ENCODE measurements at regions of chr10 and their contacts with region 1.

Region 1: DNA sequence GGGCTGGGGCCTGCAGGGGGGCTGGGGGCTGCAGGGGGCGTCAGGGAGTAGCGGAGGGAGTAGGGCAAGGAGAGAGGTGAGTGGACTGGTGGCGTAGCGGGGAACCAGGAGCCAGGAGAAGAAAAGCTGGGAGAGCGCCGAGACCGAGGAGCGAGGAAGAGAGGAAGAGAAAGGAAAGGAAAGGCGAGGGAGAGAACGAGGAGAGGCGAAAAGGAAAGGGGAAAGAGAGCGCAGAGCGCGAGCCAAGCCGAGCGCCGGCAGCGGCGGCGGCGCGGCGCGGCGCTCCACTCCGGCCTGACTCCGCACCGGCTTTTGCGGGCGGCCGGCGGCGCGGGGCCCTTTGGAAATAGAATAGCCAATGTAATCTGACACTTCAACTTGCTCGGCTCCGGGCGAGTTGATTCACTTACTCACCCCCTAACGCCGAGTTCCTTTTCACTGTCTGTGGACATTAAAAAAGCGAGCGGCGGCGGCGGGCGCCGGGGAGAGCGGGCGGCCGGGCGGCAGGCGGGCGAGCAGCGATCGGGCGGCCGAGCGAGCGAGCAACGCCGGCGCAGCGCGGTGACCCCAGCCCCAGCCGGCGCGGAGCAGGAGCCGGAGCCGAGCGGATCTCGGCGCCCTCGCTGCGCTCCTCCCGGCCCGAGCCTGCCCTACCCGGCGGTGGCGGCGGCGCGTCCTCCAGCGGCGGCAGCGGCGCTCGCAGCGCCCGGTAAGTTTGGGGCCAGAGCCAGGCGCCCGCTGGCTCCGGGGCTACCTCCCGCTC is at the start of gene ZMIZ1:
- DNase-seq: peak; percentile 74 to 86 (median 84)
- ATAC-seq: peak; percentile 78
- H3K4me3 ChIP-seq: peak within 1 kb of the TSS; percentile 83
- H3K4me3 Mint-ChIP-seq: peak within 1 kb of the TSS; percentile 92 to 98 (median 96)
- H3K27ac ChIP-seq: peak within 1 kb of the TSS; percentile 62
- H3K27ac Mint-ChIP-seq: peak within 1 kb of the TSS; percentile 57 to 97 (median 91)
- H3K4me1 ChIP-seq: peaks cover 11 to 24% of the 10 kb centered on the region in 2 donors
- H3K4me1 Mint-ChIP-seq: peaks cover 21 to 65% (median 53%) of the 10 kb centered on the region in 7 donors
- H3K27me3 ChIP-seq: no peaks in the 10 kb centered on the region
- H3K27me3 Mint-ChIP-seq: peaks cover 0 to 25% (median 0%) of the 10 kb centered on the region in 5 donors
- total RNA-seq, gene ZMIZ1: 13.5 to 57.2 (median 24.5) TPM

Region 2: DNA sequence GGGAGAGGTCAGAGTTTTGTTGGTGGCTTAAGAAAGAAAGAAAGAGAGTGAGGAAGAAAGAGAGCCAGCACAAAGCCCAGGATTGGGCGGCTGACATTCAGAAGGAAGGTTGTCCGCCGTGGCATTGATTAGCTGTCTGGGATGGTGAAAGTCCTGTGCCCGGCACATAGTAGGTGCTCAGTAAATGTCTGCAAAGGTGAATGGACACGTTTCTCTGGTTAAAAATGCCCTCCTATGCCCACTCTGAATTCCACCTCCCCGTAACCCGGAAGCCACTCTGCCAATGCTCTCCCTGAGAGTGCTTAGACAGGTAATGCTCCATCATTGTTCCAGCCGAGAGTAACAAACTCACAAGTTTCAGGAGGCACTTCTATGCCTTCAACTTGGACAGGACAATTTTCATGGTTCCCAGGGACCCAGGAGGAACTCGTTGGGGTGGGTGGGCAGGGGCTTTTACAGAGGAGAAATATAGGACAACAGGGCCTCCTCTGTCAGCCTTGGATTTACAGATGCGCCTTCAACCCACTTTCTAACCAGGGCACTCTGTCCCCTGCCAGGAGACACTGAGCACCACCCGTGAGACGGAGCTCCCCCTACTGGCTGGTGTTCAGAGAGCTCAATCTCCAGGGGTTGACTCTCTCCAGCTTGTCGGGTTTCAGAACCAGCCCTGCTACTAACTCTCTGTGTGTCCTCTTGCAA is 411.4 kb before region 1 on chr10:
- CTCF ChIA-PET with region 1: no interaction called
- POLR2A ChIA-PET with region 1: no interaction called
- intact Hi-C with region 1: loop called in 1 of 2 experiments (anchors 5 kb)
- DNase-seq: peak; percentile 12 to 70 (median 53)
- ATAC-seq: peak; percentile 85
- H3K4me3 ChIP-seq: no peak overlapping the region
- H3K4me3 Mint-ChIP-seq: no peak overlapping the region
- H3K27ac ChIP-seq: no peak overlapping the region
- H3K27ac Mint-ChIP-seq: no peak overlapping the region
- H3K4me1 ChIP-seq: no peaks in the 10 kb centered on the region
- H3K4me1 Mint-ChIP-seq: peaks cover 0 to 1% (median 0%) of the 10 kb centered on the region in 7 donors
- H3K27me3 ChIP-seq: no peaks in the 10 kb centered on the region
- H3K27me3 Mint-ChIP-seq: peaks cover 7 to 25% (median 10%) of the 10 kb centered on the region in 5 donors

Region 3: DNA sequence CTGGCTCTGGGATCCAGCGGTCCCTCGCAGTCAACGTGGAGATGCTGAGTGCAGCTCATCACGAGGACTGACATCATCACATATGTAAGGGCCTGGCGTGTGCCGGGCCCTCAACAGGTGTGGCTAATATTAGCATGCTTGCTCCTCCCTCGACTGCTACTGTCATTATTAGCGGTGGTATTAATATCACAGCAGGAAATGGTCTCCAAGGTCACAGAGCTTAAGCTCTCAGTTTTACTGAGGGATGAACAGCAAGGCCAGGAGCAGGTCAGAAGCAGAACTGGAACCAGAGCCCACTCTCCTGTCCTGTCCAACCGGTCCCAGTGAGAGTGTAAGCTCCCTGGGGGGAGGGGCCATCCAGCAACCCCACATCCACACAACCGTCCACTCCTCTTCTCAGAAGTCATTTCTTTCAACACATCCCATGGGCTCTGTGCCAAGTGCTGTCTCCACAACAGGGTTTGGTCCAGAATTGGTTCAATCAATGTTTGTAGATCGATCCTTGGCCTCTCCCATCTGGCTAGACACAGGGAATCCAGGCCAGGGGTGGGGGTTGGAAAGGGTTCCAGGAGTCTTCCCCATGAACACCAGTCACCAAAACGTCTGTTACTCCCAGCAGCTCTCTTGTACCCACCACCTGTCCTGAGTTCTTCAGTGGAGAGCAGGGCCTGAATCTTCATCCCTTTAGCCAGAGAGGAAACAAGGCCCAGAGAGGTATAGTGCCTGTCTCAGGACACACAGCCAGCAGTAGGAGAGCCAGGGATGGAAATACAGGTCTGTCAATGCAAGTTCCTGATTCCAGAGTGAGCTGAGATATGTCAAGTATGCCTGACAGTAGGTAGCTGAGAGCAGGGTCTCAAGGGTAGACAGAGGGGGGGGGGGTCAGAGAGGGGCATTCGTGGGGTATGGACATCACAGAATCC is 45.2 kb before region 1 on chr10:
- CTCF ChIA-PET with region 1: interaction called, 3 read pairs
- POLR2A ChIA-PET with region 1: no interaction called
- intact Hi-C with region 1: loop called in 1 of 2 experiments (anchors 1 kb)
- DNase-seq: no peak
- ATAC-seq: no peak
- H3K4me3 ChIP-seq: no peak overlapping the region
- H3K4me3 Mint-ChIP-seq: peak overlapping the region in 3 of 10 donors; percentile 0 to 85 (median 12)
- H3K27ac ChIP-seq: no peak overlapping the region
- H3K27ac Mint-ChIP-seq: peak overlapping the region in 6 of 9 donors; percentile 39 to 76 (median 60)
- H3K4me1 ChIP-seq: peaks cover 29 to 37% of the 10 kb centered on the region in 2 donors
- H3K4me1 Mint-ChIP-seq: peaks cover 19 to 48% (median 36%) of the 10 kb centered on the region in 7 donors
- H3K27me3 ChIP-seq: no peaks in the 10 kb centered on the region
- H3K27me3 Mint-ChIP-seq: peaks cover 0 to 5% (median 0%) of the 10 kb centered on the region in 5 donors

Region 4: GRCh38 chr10:79195091-79195923 is 126.6 kb after region 1 on chr10:
- CTCF ChIA-PET with region 1: no interaction called
- POLR2A ChIA-PET with region 1: no interaction called
- intact Hi-C with region 1: loop called (anchors 1 to 2 kb)
- DNase-seq: peak; percentile 49 to 80 (median 74)
- ATAC-seq: peak; percentile 89
- H3K4me3 ChIP-seq: no peak overlapping the region
- H3K4me3 Mint-ChIP-seq: no peak overlapping the region
- H3K27ac ChIP-seq: no peak overlapping the region
- H3K27ac Mint-ChIP-seq: no peak overlapping the region
- H3K4me1 ChIP-seq: peaks cover 0 to 3% of the 10 kb centered on the region in 2 donors
- H3K4me1 Mint-ChIP-seq: peaks cover 0 to 10% (median 5%) of the 10 kb centered on the region in 7 donors
- H3K27me3 ChIP-seq: no peaks in the 10 kb centered on the region
- H3K27me3 Mint-ChIP-seq: no peaks in the 10 kb centered on the region

Region 5: DNA sequence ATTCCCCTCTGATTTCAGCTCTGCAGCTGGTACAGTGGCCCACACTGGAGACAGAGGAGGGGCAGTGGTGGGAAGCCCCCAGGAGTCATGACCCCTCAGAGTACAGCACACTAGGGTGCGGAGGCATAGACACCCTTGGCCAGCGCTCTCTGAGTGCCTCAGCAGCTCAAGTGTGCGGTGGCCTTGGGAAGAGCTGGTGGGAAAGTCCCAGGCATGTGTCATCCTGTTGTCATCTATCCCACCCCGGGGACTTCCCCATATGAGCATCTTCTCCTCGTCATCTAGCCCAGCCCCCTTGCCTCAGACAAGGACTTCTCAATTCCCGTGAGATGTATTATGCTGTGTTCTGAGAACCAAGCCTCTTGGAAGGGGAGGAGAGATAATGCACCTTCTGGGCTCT is 263.0 kb after region 1 on chr10:
- CTCF ChIA-PET with region 1: no interaction called
- POLR2A ChIA-PET with region 1: no interaction called
- intact Hi-C with region 1: loop called (anchors 5 to 10 kb)
- DNase-seq: peak in 6 of 9 donors; percentile 25 to 82 (median 42)
- ATAC-seq: peak; percentile 95
- H3K4me3 ChIP-seq: no peak overlapping the region
- H3K4me3 Mint-ChIP-seq: peak overlapping the region in 1 of 10 donors; percentile 52
- H3K27ac ChIP-seq: no peak overlapping the region
- H3K27ac Mint-ChIP-seq: peak overlapping the region in 8 of 9 donors; percentile 6 to 87 (median 52)
- H3K4me1 ChIP-seq: peaks cover 4 to 14% of the 10 kb centered on the region in 2 donors
- H3K4me1 Mint-ChIP-seq: peaks cover 0 to 44% (median 21%) of the 10 kb centered on the region in 7 donors
- H3K27me3 ChIP-seq: no peaks in the 10 kb centered on the region
- H3K27me3 Mint-ChIP-seq: no peaks in the 10 kb centered on the region

Region 6: DNA sequence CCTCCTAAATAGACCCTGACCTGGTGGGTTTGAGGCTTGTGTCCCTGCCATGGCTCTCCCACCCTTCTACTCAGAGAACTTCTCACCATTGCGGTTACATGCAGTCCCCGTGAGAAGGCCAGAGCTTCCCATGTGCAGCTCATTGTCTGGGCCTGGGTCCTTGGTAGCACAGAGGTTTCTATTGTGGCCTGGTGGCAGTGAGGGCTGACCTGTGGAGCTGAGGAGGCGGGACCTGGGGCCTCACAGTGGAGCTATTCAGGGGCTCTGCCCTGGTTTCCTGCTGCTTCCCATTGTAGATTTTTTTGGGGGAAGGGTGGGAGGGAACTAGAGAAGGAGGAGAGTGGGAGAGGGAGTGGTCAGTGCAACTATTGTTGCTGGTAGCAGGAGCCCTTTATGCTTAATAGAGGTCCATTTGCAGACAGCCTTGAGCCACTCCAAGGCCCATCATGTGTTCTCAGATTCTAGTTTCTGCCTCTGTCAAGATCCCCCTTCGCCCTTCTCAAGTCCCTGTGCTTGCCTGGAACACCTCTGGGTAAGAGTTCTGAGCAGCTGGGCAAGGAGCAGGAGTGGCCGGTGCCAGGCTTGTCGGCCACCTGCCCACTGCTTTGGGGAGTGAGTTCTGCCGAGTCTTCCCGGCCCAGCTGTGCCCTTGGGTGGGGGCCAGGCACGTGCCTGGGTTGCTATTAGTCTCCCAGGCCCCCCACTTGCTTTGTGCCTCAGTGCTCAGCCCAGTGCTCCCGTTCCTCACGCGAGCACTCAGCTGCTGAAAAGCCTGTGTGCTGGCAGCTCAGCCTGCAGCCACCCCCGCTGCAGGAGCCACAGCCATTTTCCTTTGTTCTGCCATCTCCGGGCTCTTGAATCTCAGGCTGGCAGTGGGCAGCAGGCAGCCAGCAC is 1396.1 kb after region 1 on chr10:
- CTCF ChIA-PET with region 1: no interaction called
- POLR2A ChIA-PET with region 1: no interaction called
- intact Hi-C with region 1: loop called in 1 of 2 experiments (anchors 5 kb)
- DNase-seq: peak in 2 of 9 donors; percentile 46 to 47
- ATAC-seq: peak; percentile 11
- H3K4me3 ChIP-seq: peak overlapping the region; percentile 57
- H3K4me3 Mint-ChIP-seq: peak overlapping the region; percentile 79 to 99 (median 88)
- H3K27ac ChIP-seq: peak overlapping the region; percentile 84
- H3K27ac Mint-ChIP-seq: peak overlapping the region; percentile 87 to 99 (median 98)
- H3K4me1 ChIP-seq: peaks cover 88 to 97% of the 10 kb centered on the region in 2 donors
- H3K4me1 Mint-ChIP-seq: peaks cover 75 to 100% (median 95%) of the 10 kb centered on the region in 7 donors
- H3K27me3 ChIP-seq: no peaks in the 10 kb centered on the region
- H3K27me3 Mint-ChIP-seq: no peaks in the 10 kb centered on the region

Measured in naive thymus-derived CD4-positive, alpha-beta T cell (primary cell).